ENCODE measurements at regions of chr21 and their contacts with region 1.

Region 1: GRCh38 chr21:39183237-39184007 is at the start of gene PSMG1:
- DNase-seq: peak; percentile 90
- ATAC-seq: peak; percentile 94
- H3K4me3 ChIP-seq: peak within 1 kb of the TSS; percentile 92
- H3K27ac ChIP-seq: peak within 1 kb of the TSS; percentile 88
- H3K4me1 ChIP-seq: peaks cover 2% of the 10 kb centered on the region; the same call in 1 of the 2 replicates
- H3K27me3 ChIP-seq: no peaks in the 10 kb centered on the region
- CTCF ChIP-seq: no peak
- POLR2A ChIP-seq: peak; percentile 90
- RAD21 ChIP-seq: no peak
- total RNA-seq, gene PSMG1: 37.8 and 51.1 TPM in 2 replicates

Region 2: GRCh38 chr21:39388038-39388810 is 204.8 kb after region 1 on chr21:
- CTCF ChIA-PET with region 1: no interaction called
- POLR2A ChIA-PET with region 1: no interaction called
- dilution Hi-C with region 1: no loop called
- in situ Hi-C with region 1: no loop called
- intact Hi-C with region 1: loop called (anchors 5 kb)
- DNase-seq: peak; percentile 77
- ATAC-seq: peak; percentile 82
- H3K4me3 ChIP-seq: peak overlapping the region; percentile 56
- H3K27ac ChIP-seq: peak overlapping the region; percentile 6; the same call in 1 of the 2 replicates
- H3K4me1 ChIP-seq: peaks cover 14% of the 10 kb centered on the region
- H3K27me3 ChIP-seq: no peaks in the 10 kb centered on the region
- CTCF ChIP-seq: peak; percentile 86
- POLR2A ChIP-seq: no peak
- RAD21 ChIP-seq: peak; percentile 84

Region 3: DNA sequence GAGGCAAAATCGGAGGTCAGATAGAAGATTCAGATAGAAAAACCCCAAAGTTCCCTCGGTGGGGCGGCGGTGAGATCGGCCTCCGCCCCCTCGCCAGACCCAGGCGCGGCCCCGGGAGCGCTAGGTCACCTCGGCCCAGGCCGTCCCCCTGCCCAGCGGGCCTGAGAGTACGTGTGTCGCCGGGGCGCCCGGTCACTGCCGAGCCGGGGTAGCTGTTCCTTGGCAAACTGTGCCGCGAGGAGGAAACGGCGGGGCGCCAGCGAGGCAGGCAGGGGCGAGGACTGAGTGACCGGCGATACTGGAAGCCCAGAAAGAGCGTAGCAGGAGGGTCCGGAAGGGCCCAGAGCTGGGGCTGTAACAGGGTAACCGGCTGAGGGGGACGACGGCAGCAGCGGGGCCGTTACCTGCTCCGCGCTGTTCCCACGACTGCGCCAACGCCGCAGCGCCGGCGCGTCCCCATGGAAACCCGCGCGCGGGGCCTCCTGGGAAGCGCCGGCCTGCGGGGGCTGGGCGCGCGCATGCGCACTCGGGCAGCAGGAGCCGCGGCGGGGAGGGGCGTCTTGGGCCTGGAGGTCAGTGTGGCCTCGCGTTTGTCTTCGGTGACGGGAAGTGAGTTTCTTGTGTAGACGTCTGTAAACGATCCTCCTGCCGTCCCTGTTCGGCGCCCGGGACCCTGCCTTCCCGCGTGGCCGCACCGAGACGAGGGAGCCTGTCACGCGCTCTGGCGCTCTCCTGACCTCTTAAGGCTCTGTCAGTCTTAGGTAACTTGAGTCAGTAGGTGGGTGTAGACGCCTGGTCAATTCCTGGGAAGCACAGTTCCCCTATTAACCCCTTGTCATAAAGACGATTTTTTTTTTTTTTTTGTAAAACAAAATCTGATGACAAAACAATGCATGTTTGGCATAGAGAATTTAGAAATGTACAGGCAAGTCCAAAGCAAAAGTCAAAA is 262.2 kb after region 1 on chr21 and contains the start of gene LCA5L:
- CTCF ChIA-PET with region 1: no interaction called
- POLR2A ChIA-PET with region 1: no interaction called
- dilution Hi-C with region 1: no loop called
- in situ Hi-C with region 1: no loop called
- intact Hi-C with region 1: loop called (anchors 5 kb)
- DNase-seq: peak; percentile 81
- ATAC-seq: peak; percentile 85
- H3K4me3 ChIP-seq: peak within 1 kb of the TSS; percentile 96
- H3K27ac ChIP-seq: peak within 1 kb of the TSS; percentile 95
- H3K4me1 ChIP-seq: peaks cover 4% of the 10 kb centered on the region
- H3K27me3 ChIP-seq: peaks cover 2% of the 10 kb centered on the region; the same call in 1 of the 2 replicates
- CTCF ChIP-seq: peak; percentile 26; the same call in 1 of the 2 replicates
- POLR2A ChIP-seq: peak; percentile 59; the same call in 1 of the 2 replicates
- RAD21 ChIP-seq: no peak
- total RNA-seq, gene LCA5L: 0.18 and 0.28 TPM in 2 replicates